ENCODE measurements at regions of chr7 and their contacts with region 1.

Region 1: GRCh38 chr7:27921081-27921836 is 181.3 kb downstream of the TAX1BP1 start:
- DNase-seq: peak in 2 of 5 donors; percentile 20 to 27
- ATAC-seq: peak in 3 of 4 donors; percentile 47 to 73 (median 59)
- H3K4me3 ChIP-seq: no peak overlapping the region
- H3K27ac ChIP-seq: no peak overlapping the region
- H3K4me1 ChIP-seq: peaks cover 0 to 31% (median 10%) of the 10 kb centered on the region in 12 donors
- H3K27me3 ChIP-seq: no peaks in the 10 kb centered on the region
- CTCF ChIP-seq: peak; percentile 32 to 68 (median 59)
- POLR2A ChIP-seq: no peak

Region 2: GRCh38 chr7:27204851-27205337 is 716.4 kb before region 1 on chr7:
- intact Hi-C with region 1: loop called in 7 of 10 experiments (anchors 5 kb)
- DNase-seq: no peak
- ATAC-seq: no peak
- H3K4me3 ChIP-seq: peak overlapping the region in 1 of 12 donors; percentile 34
- H3K27ac ChIP-seq: peak overlapping the region in 1 of 12 donors; percentile 21
- H3K4me1 ChIP-seq: peaks cover 0 to 39% (median 16%) of the 10 kb centered on the region in 12 donors
- H3K27me3 ChIP-seq: peaks cover 61 to 99% (median 94%) of the 10 kb centered on the region in 9 donors
- CTCF ChIP-seq: no peak
- POLR2A ChIP-seq: no peak

Region 3: GRCh38 chr7:27745064-27745583 is 176.1 kb before region 1 on chr7:
- intact Hi-C with region 1: loop called in 1 of 10 experiments (anchors 5 kb)
- DNase-seq: no peak
- ATAC-seq: peak in 1 of 4 donors; percentile 23
- H3K4me3 ChIP-seq: no peak overlapping the region
- H3K27ac ChIP-seq: peak overlapping the region in 7 of 12 donors; percentile 0 to 47 (median 20)
- H3K4me1 ChIP-seq: peaks cover 0 to 57% (median 48%) of the 10 kb centered on the region in 12 donors
- H3K27me3 ChIP-seq: no peaks in the 10 kb centered on the region
- CTCF ChIP-seq: peak in 11 of 12 donors; percentile 34 to 62 (median 47)
- POLR2A ChIP-seq: no peak